IMR-90 (cell line): ENCODE measurements at regions of chr15 and their contacts with region 1.

Region 1: GRCh38 chr15:98311566-98312188 is 336.7 kb upstream of the IGF1R start:
- DNase-seq: peak; percentile 66
- ATAC-seq: peak; percentile 92
- H3K4me3 ChIP-seq: no peak overlapping the region
- H3K27ac ChIP-seq: no peak overlapping the region
- H3K4me1 ChIP-seq: no peaks in the 10 kb centered on the region
- H3K27me3 ChIP-seq: no peaks in the 10 kb centered on the region
- CTCF ChIP-seq: peak; percentile 75
- POLR2A ChIP-seq: no peak
- RAD21 ChIP-seq: peak; percentile 45

Region 2: GRCh38 chr15:98421419-98422129 is 109.9 kb after region 1 on chr15:
- CTCF ChIA-PET with region 1: interaction called, 15 read pairs
- POLR2A ChIA-PET with region 1: no interaction called
- dilution Hi-C with region 1: no loop called
- in situ Hi-C with region 1: loop called (anchors 5 kb)
- intact Hi-C with region 1: loop called (anchors 1 kb)
- DNase-seq: peak; percentile 13
- ATAC-seq: peak; percentile 92
- H3K4me3 ChIP-seq: no peak overlapping the region; the same call in 1 of the 2 replicates
- H3K27ac ChIP-seq: no peak overlapping the region
- H3K4me1 ChIP-seq: no peaks in the 10 kb centered on the region; the same call in 1 of the 2 replicates
- H3K27me3 ChIP-seq: peaks cover 36% of the 10 kb centered on the region
- CTCF ChIP-seq: peak; percentile 95
- POLR2A ChIP-seq: peak; percentile 38; the same call in 1 of the 2 replicates
- RAD21 ChIP-seq: peak; percentile 82

Region 3: DNA sequence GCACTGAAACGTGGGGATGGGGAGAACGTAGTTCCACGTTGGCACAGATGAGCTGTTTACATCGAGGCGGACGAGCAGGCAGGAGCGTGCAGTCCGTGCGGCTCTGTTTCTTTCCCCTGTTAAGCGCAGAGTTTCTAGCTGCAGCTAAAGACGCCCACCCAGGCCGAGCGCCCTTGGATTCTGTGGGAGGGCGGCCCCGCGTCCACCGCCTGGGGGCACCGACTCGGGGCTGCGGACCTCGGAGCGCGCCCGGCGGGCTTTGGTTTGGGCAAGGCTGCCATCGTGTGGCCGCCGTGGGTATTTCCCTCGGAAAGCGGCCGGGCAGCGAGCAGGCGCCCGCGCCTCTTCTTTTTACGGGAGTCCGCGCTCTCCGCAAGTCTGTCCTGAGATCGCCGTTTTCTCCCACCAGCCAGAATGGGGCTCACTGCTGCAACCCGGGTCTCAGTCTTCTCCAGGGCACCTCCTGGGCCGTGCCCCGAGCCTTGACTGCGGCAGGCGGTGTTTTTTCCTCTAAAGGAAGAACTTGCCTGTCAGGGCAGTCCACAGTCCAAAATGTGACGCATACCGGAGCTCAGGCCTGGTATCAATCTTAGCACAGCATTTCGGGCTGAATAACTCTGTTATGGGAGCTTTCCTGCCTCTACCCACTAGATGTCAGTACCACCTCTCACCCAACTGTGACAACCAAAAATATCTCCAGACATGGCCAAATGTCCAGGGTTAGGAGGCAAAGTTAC is 116.7 kb after region 1 on chr15:
- CTCF ChIA-PET with region 1: interaction called, 15 read pairs
- POLR2A ChIA-PET with region 1: no interaction called
- dilution Hi-C with region 1: no loop called
- in situ Hi-C with region 1: loop called (anchors 5 kb)
- intact Hi-C with region 1: loop called (anchors 2 kb)
- DNase-seq: peak; percentile 50
- ATAC-seq: peak; percentile 99
- H3K4me3 ChIP-seq: peak overlapping the region; percentile 50
- H3K27ac ChIP-seq: no peak overlapping the region
- H3K4me1 ChIP-seq: no peaks in the 10 kb centered on the region
- H3K27me3 ChIP-seq: peaks cover 18% of the 10 kb centered on the region
- CTCF ChIP-seq: peak; percentile 78
- POLR2A ChIP-seq: no peak
- RAD21 ChIP-seq: peak; percentile 52